Psoas muscle (tissue), 8 donors: ENCODE measurements at regions of chr4 and their contacts with region 1.

Region 1: DNA sequence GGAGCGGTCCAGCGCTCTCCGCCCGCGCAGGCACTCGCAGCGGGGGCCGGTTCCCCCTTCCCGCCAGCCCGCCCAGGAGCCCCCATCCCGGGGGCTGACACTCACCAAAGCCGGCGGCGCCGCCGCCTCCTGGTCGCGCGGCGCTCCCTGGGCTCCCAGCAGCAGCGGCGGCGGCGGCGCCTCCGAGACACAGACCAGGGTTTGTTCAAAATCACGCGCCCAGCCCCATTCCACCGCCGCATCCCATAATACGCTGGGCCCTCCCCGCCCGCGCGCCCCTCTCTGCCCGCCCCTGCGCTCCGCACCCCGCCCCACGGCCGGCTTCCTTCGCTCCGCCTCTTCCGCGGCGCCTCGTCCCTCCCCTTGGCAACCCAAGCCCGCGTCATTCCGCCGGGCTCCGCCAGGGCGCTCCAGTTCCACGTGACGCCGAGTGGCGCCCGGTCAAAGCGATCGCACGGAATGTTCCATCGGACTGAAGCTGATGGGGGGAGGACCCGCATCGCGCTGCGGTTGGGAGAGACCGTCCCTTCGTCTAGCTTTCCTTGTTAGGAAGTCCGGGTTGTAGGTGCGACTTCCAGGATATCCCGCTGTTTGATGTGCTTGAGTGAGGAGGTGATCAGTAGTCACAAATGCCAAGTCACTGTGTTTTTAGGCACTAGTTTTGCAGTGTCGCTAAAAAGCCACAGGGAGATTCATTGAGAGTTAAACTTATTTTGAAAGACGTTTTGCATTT is 2.2 kb upstream of the LIN54 start:
- DNase-seq: peak; percentile 97 to 99
- ATAC-seq: peak; percentile 95 to 98 (median 97)
- H3K4me3 ChIP-seq: peak overlapping the region; percentile 87
- H3K27ac ChIP-seq: peak overlapping the region; percentile 83
- H3K4me1 ChIP-seq: peaks cover 22% of the 10 kb centered on the region
- H3K27me3 ChIP-seq: no peaks in the 10 kb centered on the region
- CTCF ChIP-seq: peak; percentile 45

Region 2: GRCh38 chr4:82890901-82891706 is 121.7 kb before region 1 on chr4 and contains the start of gene SEC31A:
- intact Hi-C with region 1: loop called in 1 of 2 experiments (anchors 5 kb)
- DNase-seq: peak; percentile 96 to 98
- ATAC-seq: peak; percentile 97 to 99 (median 98)
- H3K4me3 ChIP-seq: peak within 1 kb of the TSS; percentile 66
- H3K27ac ChIP-seq: peak within 1 kb of the TSS; percentile 86
- H3K4me1 ChIP-seq: peaks cover 31% of the 10 kb centered on the region
- H3K27me3 ChIP-seq: no peaks in the 10 kb centered on the region
- CTCF ChIP-seq: no peak
- total RNA-seq, gene SEC31A: 94.6 to 117 (median 106) TPM

Region 3: DNA sequence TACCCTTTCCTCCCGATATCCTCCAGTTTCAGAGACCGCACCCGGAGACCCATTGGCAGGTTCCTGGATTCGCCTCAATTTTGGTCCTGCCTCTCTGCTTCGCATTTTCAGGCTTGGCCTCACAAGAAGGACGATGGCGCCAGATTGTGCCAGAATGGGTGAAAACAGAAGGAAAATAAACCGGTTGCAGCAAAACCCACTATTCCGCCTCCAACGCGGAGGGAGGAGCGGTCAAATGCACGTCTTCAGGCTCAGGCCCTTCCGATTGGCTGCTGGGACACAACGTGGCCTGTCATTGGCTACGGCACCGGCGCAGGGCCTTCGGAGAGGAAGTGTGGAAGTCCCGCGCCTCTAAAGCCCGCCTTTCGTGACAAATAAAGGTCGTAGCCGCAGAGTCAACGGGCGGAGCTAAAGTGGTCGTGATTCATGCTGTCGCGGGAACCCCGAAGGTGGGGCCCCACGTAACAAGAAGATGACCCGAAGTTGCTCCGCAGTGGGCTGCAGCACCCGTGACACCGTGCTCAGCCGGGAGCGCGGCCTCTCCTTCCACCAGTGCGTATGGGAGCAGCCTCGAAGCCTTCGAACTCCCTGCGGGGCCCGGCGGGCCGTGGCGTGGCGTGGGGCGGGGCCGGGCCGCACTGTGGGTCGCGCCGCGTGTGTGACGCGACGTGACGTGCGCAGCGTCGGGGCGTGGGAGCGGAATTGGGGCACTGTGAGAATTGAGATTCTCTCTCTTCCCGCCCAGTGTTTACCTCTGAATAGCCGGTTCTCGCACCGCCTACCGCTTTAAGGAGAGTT is 112.3 kb before region 1 on chr4 and contains the start of gene THAP9:
- intact Hi-C with region 1: loop called in 1 of 2 experiments (anchors 5 kb)
- DNase-seq: peak; percentile 98 to 99
- ATAC-seq: peak; percentile 96 to 98 (median 97)
- H3K4me3 ChIP-seq: peak within 1 kb of the TSS; percentile 76
- H3K27ac ChIP-seq: peak within 1 kb of the TSS; percentile 96
- H3K4me1 ChIP-seq: peaks cover 37% of the 10 kb centered on the region
- H3K27me3 ChIP-seq: no peaks in the 10 kb centered on the region
- CTCF ChIP-seq: no peak
- total RNA-seq, gene THAP9: 7.3 to 10.2 (median 7.8) TPM

Region 4: DNA sequence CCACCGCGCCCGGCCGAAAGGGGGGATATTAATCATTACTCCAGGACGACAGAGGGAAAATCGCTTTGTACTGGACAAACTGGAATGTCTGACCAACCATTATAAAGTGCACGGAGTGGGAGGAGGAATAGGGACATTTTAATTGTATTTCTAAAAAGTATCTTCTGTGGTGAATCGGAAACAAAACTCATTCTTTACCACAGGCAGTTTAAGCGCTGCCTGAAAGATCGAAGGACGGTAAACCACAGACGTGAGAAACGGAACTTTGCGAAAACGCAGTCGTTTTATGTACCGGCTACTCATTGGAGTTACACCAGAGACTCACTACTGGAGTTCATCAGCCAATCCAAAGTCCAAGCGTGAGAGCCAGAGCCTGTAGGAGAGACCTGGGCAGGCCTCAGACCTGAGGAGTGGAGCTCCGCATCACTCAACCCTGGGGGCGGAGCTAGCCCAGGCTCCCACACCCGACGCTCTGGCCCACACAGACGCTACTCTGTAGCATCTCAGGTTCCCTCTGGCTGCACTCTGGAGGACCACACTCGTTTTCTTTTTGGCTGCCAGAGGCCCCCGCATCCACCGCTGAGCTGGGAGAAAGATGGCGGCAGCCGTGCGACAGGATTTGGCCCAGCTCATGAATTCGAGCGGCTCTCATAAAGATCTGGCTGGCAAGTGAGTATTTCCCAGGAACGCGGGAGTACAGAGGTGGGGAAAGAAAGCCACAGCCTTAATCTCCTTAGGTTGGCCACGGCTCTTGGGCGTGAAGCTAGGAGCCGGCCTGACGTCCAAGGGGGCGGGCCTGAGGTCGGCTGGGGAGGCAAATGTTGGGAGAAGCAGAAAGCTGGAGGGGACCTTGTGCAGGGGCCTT is 22.0 kb after region 1 on chr4 and contains the start of gene COPS4:
- intact Hi-C with region 1: loop called (anchors 1 to 2 kb)
- DNase-seq: peak; percentile 96 to 98
- ATAC-seq: peak; percentile 98 to 100 (median 100)
- H3K4me3 ChIP-seq: peak within 1 kb of the TSS; percentile 92
- H3K27ac ChIP-seq: peak within 1 kb of the TSS; percentile 92
- H3K4me1 ChIP-seq: peaks cover 21% of the 10 kb centered on the region
- H3K27me3 ChIP-seq: no peaks in the 10 kb centered on the region
- CTCF ChIP-seq: peak; percentile 34
- total RNA-seq, gene COPS4: 51.2 to 71.7 (median 65.8) TPM